ENCODE measurements at regions of chr5 and their contacts with region 1.

Region 1: GRCh38 chr5:157219491-157220271 is 39.0 kb downstream of the ITK start:
- DNase-seq: peak; percentile 21
- ATAC-seq: no peak
- H3K4me3 Mint-ChIP-seq: peak overlapping the region; percentile 39
- H3K27ac Mint-ChIP-seq: peak overlapping the region; percentile 90
- H3K4me1 Mint-ChIP-seq: peaks cover 94% of the 10 kb centered on the region
- H3K27me3 Mint-ChIP-seq: no peaks in the 10 kb centered on the region

Region 2: GRCh38 chr5:157180374-157181264 is 39.1 kb before region 1 on chr5 and contains the start of gene ITK:
- CTCF ChIA-PET with region 1: interaction called, 9 read pairs
- POLR2A ChIA-PET with region 1: interaction called, 148 read pairs
- DNase-seq: peak; percentile 80
- ATAC-seq: peak; percentile 80
- H3K4me3 Mint-ChIP-seq: peak within 1 kb of the TSS; percentile 99
- H3K27ac Mint-ChIP-seq: peak within 1 kb of the TSS; percentile 98
- H3K4me1 Mint-ChIP-seq: peaks cover 47% of the 10 kb centered on the region
- H3K27me3 Mint-ChIP-seq: no peaks in the 10 kb centered on the region
- total RNA-seq, gene ITK: 254 to 263 TPM

Region 3: GRCh38 chr5:157189223-157189622 is 30.5 kb before region 1 on chr5:
- CTCF ChIA-PET with region 1: interaction called, 7 read pairs
- POLR2A ChIA-PET with region 1: interaction called, 148 read pairs
- DNase-seq: peak; percentile 41
- ATAC-seq: no peak
- H3K4me3 Mint-ChIP-seq: peak overlapping the region; percentile 99
- H3K27ac Mint-ChIP-seq: peak overlapping the region; percentile 82
- H3K4me1 Mint-ChIP-seq: peaks cover 79% of the 10 kb centered on the region
- H3K27me3 Mint-ChIP-seq: no peaks in the 10 kb centered on the region

Region 4: DNA sequence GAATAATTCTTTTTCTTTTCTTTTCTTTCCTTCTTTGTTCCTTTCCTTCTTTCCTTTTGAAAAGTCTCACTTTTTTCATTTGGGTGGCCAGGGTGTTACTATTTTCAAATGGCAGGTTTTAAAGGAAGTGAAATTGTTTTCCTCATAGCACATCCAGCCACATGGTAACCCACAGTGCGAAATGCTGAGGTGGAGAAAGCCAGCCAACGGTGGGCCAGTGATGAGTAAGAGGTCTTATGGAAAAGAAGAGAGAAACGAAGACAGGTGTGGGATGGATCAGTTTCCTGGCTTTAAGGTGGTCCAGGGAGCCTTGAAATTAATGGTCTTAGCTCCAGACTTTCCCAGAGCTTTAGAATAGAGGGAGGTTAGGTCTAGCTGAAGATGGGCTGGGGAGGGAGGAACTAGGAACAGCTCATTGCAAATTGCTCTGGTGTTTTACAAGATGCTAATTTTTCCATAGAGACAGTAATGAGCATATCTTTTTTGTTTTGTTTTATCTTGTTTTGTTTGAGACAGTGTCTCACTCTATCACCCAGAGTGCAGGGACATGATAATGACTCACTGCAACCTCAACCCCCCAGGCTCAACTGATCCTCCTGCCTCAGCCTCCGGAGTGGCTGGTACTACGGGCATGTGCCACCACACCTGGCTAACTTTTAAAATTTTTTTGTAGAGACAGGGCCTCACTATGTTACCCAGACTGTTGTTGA is 21.2 kb before region 1 on chr5:
- CTCF ChIA-PET with region 1: interaction called, 17 read pairs
- POLR2A ChIA-PET with region 1: interaction called, 148 read pairs
- DNase-seq: peak; percentile 64
- ATAC-seq: peak; percentile 67
- H3K4me3 Mint-ChIP-seq: peak overlapping the region; percentile 69
- H3K27ac Mint-ChIP-seq: peak overlapping the region; percentile 88
- H3K4me1 Mint-ChIP-seq: peaks cover 93% of the 10 kb centered on the region
- H3K27me3 Mint-ChIP-seq: no peaks in the 10 kb centered on the region

Region 5: GRCh38 chr5:157204765-157205164 is 14.9 kb before region 1 on chr5:
- CTCF ChIA-PET with region 1: interaction called, 17 read pairs
- POLR2A ChIA-PET with region 1: interaction called, 34 read pairs
- DNase-seq: no peak
- ATAC-seq: peak; percentile 28
- H3K4me3 Mint-ChIP-seq: peak overlapping the region; percentile 13
- H3K27ac Mint-ChIP-seq: peak overlapping the region; percentile 68
- H3K4me1 Mint-ChIP-seq: peaks cover 87% of the 10 kb centered on the region
- H3K27me3 Mint-ChIP-seq: no peaks in the 10 kb centered on the region

Region 6: DNA sequence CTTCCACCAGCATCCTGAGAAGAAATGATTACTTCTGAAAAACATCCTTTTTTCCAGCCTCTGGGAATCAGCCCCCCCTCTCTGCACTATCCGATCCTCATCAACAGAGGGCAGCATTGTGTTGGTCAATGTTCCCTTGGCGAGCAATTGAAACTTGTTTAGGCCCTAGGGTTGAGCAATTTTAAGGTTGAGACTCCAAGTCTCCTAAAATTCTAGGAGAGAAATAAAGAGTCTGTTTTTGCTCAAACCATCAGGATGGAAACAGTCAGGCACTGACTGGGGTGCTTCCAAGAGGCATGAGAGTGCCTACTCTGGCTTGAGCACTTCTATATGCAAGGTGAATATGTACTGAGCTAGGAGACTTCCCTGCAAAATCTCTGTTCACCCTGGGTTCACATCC is 33.9 kb after region 1 on chr5:
- CTCF ChIA-PET with region 1: interaction called, 12 read pairs
- POLR2A ChIA-PET with region 1: interaction called, 7 read pairs
- DNase-seq: no peak
- ATAC-seq: no peak
- H3K4me3 Mint-ChIP-seq: peak overlapping the region; percentile 54
- H3K27ac Mint-ChIP-seq: peak overlapping the region; percentile 94
- H3K4me1 Mint-ChIP-seq: peaks cover 95% of the 10 kb centered on the region
- H3K27me3 Mint-ChIP-seq: no peaks in the 10 kb centered on the region

Region 7: GRCh38 chr5:157271740-157272271 is 52.1 kb after region 1 on chr5:
- CTCF ChIA-PET with region 1: interaction called, 4 read pairs
- POLR2A ChIA-PET with region 1: interaction called, 17 read pairs
- DNase-seq: peak; percentile 97
- ATAC-seq: peak; percentile 87
- H3K4me3 Mint-ChIP-seq: peak overlapping the region; percentile 79
- H3K27ac Mint-ChIP-seq: peak overlapping the region; percentile 95
- H3K4me1 Mint-ChIP-seq: peaks cover 78% of the 10 kb centered on the region
- H3K27me3 Mint-ChIP-seq: no peaks in the 10 kb centered on the region

Region 8: DNA sequence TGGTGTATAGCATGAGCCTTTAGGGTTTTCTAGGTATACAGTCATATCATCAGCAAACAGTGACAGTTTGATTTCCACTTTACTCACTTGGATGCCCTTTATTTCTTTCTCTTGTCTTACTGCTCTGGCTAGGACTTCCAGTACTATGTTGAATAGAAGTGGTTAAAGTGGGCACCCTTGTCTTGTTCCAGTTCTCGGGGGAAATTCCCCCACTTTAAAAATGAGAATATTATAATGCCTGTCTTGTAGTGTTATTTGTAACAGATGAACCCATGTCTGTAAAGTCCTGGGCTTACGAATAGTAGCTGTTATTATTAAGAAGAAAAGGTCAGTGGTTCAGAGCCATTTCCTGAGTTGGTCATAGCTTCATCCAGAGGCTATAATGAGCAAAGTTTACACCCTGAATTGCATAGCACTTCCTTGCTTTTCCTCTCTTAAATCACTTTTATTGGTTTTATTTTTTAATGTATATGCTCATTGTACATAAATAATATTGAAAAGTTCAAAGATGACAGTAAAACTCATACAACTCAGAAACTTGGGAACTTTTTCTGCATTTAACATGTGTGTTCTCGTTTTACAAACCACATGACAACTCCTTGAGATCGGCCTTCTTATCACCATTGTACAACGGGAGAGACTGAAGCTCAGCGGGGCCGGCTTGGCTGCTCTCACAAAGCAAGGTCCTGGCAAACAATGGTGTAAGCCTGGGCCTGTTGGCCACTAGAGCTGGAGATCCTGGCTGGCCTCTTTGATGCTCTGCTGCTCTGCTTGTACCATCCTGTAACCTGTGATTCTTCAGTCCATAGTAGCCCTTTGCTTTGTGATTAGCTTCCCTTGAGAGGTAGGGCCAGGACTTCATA is 131.5 kb after region 1 on chr5:
- CTCF ChIA-PET with region 1: no interaction called
- POLR2A ChIA-PET with region 1: no interaction called
- DNase-seq: no peak
- ATAC-seq: no peak
- H3K4me3 Mint-ChIP-seq: no peak overlapping the region
- H3K27ac Mint-ChIP-seq: peak overlapping the region; percentile 57
- H3K4me1 Mint-ChIP-seq: peaks cover 19% of the 10 kb centered on the region
- H3K27me3 Mint-ChIP-seq: no peaks in the 10 kb centered on the region

Measured in activated CD8-positive, alpha-beta T cell treated with anti-CD3 and anti-CD28 coated beads, Interleukin-2, amount 10 ng/mL, durations not matched to agents 7 days and 5 days (primary cell).